B cell (primary cell): ENCODE measurements at regions of chr5 and their contacts with region 1.

Region 1: DNA sequence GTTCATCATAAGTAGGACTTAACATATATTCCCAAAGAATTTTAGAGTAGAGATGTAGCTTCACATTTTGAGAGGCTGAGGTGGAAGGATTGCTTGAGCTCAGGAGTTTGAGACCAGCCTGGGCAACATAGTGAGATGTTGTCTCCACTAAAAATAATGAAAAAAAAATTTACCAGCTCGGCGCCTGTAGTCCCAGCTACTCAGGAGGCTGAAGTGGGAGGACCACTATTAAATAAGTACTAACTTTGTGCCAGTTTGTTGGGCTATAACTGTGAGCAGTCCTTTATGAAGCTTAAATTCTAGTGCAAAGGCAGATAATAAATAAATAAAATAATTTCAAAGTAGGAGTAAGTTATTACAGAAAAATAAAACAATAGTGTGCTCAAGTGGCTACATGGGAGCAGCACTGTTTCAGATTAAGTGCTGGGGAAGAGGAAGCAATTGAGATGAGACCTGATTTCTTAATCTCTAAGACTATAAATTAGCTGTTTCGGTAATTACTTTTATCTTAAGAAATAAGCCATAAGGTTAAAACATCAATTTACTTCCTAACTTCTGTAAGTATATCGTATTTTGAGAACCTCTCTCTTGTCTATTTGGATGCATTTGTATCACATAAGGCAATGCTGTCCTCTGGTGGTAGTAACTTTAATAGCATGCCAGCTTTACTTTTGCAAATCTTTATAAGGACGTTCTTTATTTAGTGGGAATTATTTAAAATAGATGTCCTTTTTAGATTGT is 98.9 kb downstream of the CSNK1G3 start:
- DNase-seq: peak; percentile 77
- ATAC-seq: peak; percentile 73
- H3K4me3 ChIP-seq: no peak overlapping the region
- H3K4me3 Mint-ChIP-seq: no peak overlapping the region
- H3K27ac ChIP-seq: peak overlapping the region in 1 of 2 donors; percentile 60
- H3K27ac Mint-ChIP-seq: peak overlapping the region; percentile 47
- H3K4me1 ChIP-seq: no peaks in the 10 kb centered on the region
- H3K4me1 Mint-ChIP-seq: peaks cover 9% of the 10 kb centered on the region
- H3K27me3 ChIP-seq: no peaks in the 10 kb centered on the region
- H3K27me3 Mint-ChIP-seq: no peaks in the 10 kb centered on the region
- CTCF ChIP-seq: peak; percentile 100

Region 2: GRCh38 chr5:122192497-122193496 is 1418.0 kb before region 1 on chr5:
- CTCF ChIA-PET with region 1: no interaction called
- POLR2A ChIA-PET with region 1: no interaction called
- intact Hi-C with region 1: loop called (anchors 10 kb)
- DNase-seq: peak; percentile 26
- ATAC-seq: no peak
- H3K4me3 ChIP-seq: no peak overlapping the region
- H3K4me3 Mint-ChIP-seq: no peak overlapping the region
- H3K27ac ChIP-seq: no peak overlapping the region
- H3K27ac Mint-ChIP-seq: no peak overlapping the region
- H3K4me1 ChIP-seq: no peaks in the 10 kb centered on the region
- H3K4me1 Mint-ChIP-seq: no peaks in the 10 kb centered on the region
- H3K27me3 ChIP-seq: no peaks in the 10 kb centered on the region
- H3K27me3 Mint-ChIP-seq: peaks cover 23% of the 10 kb centered on the region
- CTCF ChIP-seq: peak; percentile 54

Region 3: DNA sequence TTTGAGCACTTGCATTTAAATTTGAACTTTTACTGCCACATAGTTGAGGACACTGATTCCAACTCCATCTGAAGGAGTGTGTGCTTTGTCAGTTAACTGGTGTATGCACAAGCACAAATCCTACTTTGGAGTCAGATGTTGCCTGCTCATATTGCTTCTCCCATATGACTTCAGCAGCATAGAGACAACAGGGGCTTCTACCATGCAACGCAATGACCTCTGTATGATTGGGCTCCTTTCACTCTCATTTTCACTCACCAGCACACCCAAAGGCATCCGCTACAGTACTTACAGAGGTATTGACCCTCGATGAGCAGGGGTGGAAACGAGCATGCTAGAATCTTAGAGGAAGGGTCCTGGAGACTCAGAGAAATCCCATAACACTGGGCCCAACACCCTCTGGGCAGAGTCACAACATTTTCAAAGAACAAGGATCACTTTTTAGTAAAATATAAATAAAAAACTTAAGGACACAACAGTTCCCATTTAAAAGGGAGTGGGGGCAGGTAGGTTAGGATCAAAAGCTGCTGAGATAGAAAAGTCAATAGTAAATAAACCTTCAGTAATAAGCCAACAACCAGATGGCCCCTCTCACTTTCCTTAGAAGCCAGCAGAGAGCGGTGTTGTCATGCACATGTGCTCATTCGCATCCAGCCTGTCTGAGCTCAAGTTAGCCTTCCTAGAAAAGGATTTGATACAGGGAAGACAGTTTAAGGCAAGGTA is 1095.0 kb before region 1 on chr5:
- CTCF ChIA-PET with region 1: interaction called, 9 read pairs
- POLR2A ChIA-PET with region 1: no interaction called
- intact Hi-C with region 1: loop called (anchors 2 kb)
- DNase-seq: peak; percentile 77
- ATAC-seq: peak; percentile 73
- H3K4me3 ChIP-seq: no peak overlapping the region
- H3K4me3 Mint-ChIP-seq: no peak overlapping the region
- H3K27ac ChIP-seq: no peak overlapping the region
- H3K27ac Mint-ChIP-seq: no peak overlapping the region
- H3K4me1 ChIP-seq: peaks cover 0 to 3% of the 10 kb centered on the region in 2 donors
- H3K4me1 Mint-ChIP-seq: peaks cover 4% of the 10 kb centered on the region
- H3K27me3 ChIP-seq: peaks cover 0 to 4% (median 0%) of the 10 kb centered on the region in 4 experiments
- H3K27me3 Mint-ChIP-seq: peaks cover 4% of the 10 kb centered on the region
- CTCF ChIP-seq: peak; percentile 89

Region 4: GRCh38 chr5:123371575-123372179 is 239.2 kb before region 1 on chr5:
- CTCF ChIA-PET with region 1: interaction called, 11 read pairs
- POLR2A ChIA-PET with region 1: no interaction called
- intact Hi-C with region 1: loop called (anchors 2 kb)
- DNase-seq: peak; percentile 40
- ATAC-seq: no peak
- H3K4me3 ChIP-seq: no peak overlapping the region
- H3K4me3 Mint-ChIP-seq: no peak overlapping the region
- H3K27ac ChIP-seq: no peak overlapping the region
- H3K27ac Mint-ChIP-seq: no peak overlapping the region
- H3K4me1 ChIP-seq: no peaks in the 10 kb centered on the region
- H3K4me1 Mint-ChIP-seq: no peaks in the 10 kb centered on the region
- H3K27me3 ChIP-seq: no peaks in the 10 kb centered on the region
- H3K27me3 Mint-ChIP-seq: no peaks in the 10 kb centered on the region
- CTCF ChIP-seq: peak; percentile 56

Region 5: DNA sequence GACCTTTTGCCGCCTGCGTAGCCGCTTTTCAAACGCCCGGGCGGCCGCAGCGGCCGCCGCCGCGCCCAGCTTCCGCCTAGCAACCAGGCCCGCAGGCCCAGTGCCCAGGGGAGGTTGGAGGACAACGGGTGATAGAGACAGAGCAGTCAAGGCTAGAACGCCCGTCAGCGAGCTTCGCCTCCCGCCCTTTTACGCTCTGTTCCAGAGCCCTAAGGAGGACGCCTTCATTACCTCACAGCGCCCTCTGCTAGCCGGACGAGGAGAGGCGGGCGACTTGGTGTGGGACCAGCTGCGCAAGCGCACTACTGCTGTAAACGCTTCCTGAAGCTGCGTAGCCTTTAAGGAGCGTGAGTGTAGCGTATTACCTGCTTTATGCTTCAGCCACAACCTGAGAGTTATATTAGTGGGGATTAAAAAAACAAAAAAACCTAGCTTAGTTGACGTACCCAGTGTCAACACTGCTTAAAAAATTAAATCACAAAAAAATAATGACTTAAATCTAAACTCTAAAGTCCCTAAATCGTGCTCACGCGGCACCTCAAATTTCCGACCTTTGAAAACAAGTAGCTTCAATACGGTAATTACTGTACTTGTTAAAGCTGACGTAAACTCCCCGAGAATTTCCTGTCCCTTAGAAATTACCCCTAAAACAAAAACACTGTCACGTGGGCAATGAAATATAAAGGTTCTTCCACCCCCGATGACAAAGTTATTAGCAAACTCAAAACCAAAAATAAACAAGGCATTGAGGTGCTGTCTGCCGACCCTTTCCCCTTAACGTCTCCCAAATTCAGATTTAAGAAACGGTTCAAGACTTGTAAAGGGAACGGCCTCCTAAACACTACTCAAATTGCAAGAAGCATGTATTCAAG is 187.3 kb before region 1 on chr5 and contains the start of gene CEP120:
- CTCF ChIA-PET with region 1: interaction called, 53 read pairs
- POLR2A ChIA-PET with region 1: interaction called, 9 read pairs
- intact Hi-C with region 1: loop called (anchors 1 kb)
- DNase-seq: peak; percentile 99
- ATAC-seq: peak; percentile 97
- H3K4me3 ChIP-seq: peak within 1 kb of the TSS; percentile 51 to 90 (median 89)
- H3K4me3 Mint-ChIP-seq: no peak within 1 kb of the TSS
- H3K27ac ChIP-seq: peak within 1 kb of the TSS; percentile 96 to 99
- H3K27ac Mint-ChIP-seq: no peak within 1 kb of the TSS
- H3K4me1 ChIP-seq: peaks cover 32 to 34% of the 10 kb centered on the region in 2 donors
- H3K4me1 Mint-ChIP-seq: peaks cover 22% of the 10 kb centered on the region
- H3K27me3 ChIP-seq: no peaks in the 10 kb centered on the region
- H3K27me3 Mint-ChIP-seq: no peaks in the 10 kb centered on the region
- CTCF ChIP-seq: peak; percentile 87
- total RNA-seq, gene CEP120: 89.7 and 97.9 TPM in 2 replicates

Region 6: DNA sequence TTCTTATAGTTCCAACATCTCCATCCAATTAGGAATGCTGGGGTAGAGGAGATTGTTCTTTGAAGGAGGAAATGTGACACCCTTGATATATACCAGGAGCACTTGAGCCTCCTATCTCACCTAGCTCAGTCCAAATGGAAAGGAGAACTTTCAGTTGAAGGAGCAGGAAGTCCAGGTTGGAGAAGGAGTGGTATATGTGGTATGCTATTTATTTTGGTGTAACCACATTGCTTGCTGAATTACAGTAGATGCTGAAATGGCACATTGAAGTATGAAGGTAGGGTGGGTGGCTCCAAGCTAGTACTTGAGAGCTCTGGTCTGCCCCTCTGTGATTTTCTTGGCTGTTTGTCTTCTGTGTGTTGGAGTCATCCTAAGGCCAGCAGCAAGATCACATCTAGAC is 92.7 kb before region 1 on chr5:
- CTCF ChIA-PET with region 1: interaction called, 3 read pairs
- POLR2A ChIA-PET with region 1: no interaction called
- intact Hi-C with region 1: loop called (anchors 2 kb)
- DNase-seq: peak; percentile 39
- ATAC-seq: peak; percentile 24
- H3K4me3 ChIP-seq: peak overlapping the region in 1 of 5 experiments; percentile 6
- H3K4me3 Mint-ChIP-seq: peak overlapping the region; percentile 62
- H3K27ac ChIP-seq: peak overlapping the region; percentile 74 to 80
- H3K27ac Mint-ChIP-seq: peak overlapping the region; percentile 80
- H3K4me1 ChIP-seq: peaks cover 65 to 88% of the 10 kb centered on the region in 2 donors
- H3K4me1 Mint-ChIP-seq: peaks cover 80% of the 10 kb centered on the region
- H3K27me3 ChIP-seq: no peaks in the 10 kb centered on the region
- H3K27me3 Mint-ChIP-seq: no peaks in the 10 kb centered on the region
- CTCF ChIP-seq: no peak

Region 7: GRCh38 chr5:123802298-123802951 is 191.6 kb after region 1 on chr5:
- CTCF ChIA-PET with region 1: no interaction called
- POLR2A ChIA-PET with region 1: no interaction called
- intact Hi-C with region 1: no loop called
- DNase-seq: no peak
- ATAC-seq: no peak
- H3K4me3 ChIP-seq: no peak overlapping the region
- H3K4me3 Mint-ChIP-seq: no peak overlapping the region
- H3K27ac ChIP-seq: no peak overlapping the region
- H3K27ac Mint-ChIP-seq: no peak overlapping the region
- H3K4me1 ChIP-seq: no peaks in the 10 kb centered on the region
- H3K4me1 Mint-ChIP-seq: no peaks in the 10 kb centered on the region
- H3K27me3 ChIP-seq: no peaks in the 10 kb centered on the region
- H3K27me3 Mint-ChIP-seq: no peaks in the 10 kb centered on the region
- CTCF ChIP-seq: no peak